ENCODE measurements at regions of chr3 and their contacts with region 1.

Region 1: GRCh38 chr3:4656059-4656458 is 162.9 kb downstream of the ITPR1 start:
- DNase-seq: peak; percentile 71
- H3K4me3 Mint-ChIP-seq: no peak overlapping the region
- H3K27ac Mint-ChIP-seq: no peak overlapping the region
- H3K4me1 Mint-ChIP-seq: peaks cover 11% of the 10 kb centered on the region
- H3K27me3 Mint-ChIP-seq: no peaks in the 10 kb centered on the region
- CTCF ChIP-seq: peak; percentile 82

Region 2: GRCh38 chr3:4672725-4673275 is 16.7 kb after region 1 on chr3:
- CTCF ChIA-PET with region 1: interaction called, 14 read pairs
- POLR2A ChIA-PET with region 1: no interaction called
- intact Hi-C with region 1: no loop called
- DNase-seq: no peak
- H3K4me3 Mint-ChIP-seq: no peak overlapping the region
- H3K27ac Mint-ChIP-seq: no peak overlapping the region
- H3K4me1 Mint-ChIP-seq: peaks cover 5% of the 10 kb centered on the region
- H3K27me3 Mint-ChIP-seq: no peaks in the 10 kb centered on the region
- CTCF ChIP-seq: no peak

Region 3: GRCh38 chr3:4736284-4736861 is 80.3 kb after region 1 on chr3:
- CTCF ChIA-PET with region 1: no interaction called
- POLR2A ChIA-PET with region 1: no interaction called
- intact Hi-C with region 1: no loop called
- DNase-seq: peak; percentile 91
- H3K4me3 Mint-ChIP-seq: peak overlapping the region; percentile 25
- H3K27ac Mint-ChIP-seq: peak overlapping the region; percentile 53
- H3K4me1 Mint-ChIP-seq: peaks cover 28% of the 10 kb centered on the region
- H3K27me3 Mint-ChIP-seq: no peaks in the 10 kb centered on the region
- CTCF ChIP-seq: no peak

Measured in MCF 10A (cell line).